Dorsolateral prefrontal cortex (tissue), 120 donors: ENCODE measurements at regions of chr19 and their contacts with region 1.

Region 1: DNA sequence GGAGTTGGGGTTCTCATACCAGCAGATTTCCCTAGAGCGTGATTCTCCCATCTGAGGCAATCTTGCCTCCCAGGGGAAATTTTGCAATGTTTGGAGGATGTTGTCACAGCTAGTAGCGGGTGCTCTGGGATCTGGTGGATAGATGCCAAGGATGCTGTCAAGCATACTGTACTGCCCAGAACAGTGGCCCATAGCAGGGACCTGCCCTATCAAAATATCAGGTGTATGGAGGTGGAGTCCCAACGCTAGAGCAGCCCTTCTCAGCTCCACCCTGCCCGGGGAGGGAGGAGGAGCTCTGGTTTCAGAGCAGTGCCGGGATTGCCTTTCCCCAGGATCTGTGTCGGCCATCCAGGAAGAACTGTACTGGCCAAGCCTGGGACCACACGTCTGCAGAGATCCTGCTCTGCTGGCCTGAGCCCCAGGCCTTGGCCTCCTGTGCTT is 10.9 kb upstream of the QTRT1 start:
- DNase-seq: peak in 1 of 10 donors; percentile 16
- H3K4me3 ChIP-seq: no peak overlapping the region
- H3K27ac ChIP-seq: peak overlapping the region in 4 of 59 donors; percentile 1 to 34 (median 28)
- H3K27me3 ChIP-seq: no peaks in the 10 kb centered on the region
- CTCF ChIP-seq: no peak

Region 2: GRCh38 chr19:10471909-10472308 is 218.5 kb before region 1 on chr19:
- intact Hi-C with region 1: no loop called
- DNase-seq: no peak
- H3K4me3 ChIP-seq: no peak overlapping the region
- H3K27ac ChIP-seq: no peak overlapping the region
- H3K27me3 ChIP-seq: no peaks in the 10 kb centered on the region
- CTCF ChIP-seq: peak in 44 of 56 donors; percentile 9 to 53 (median 32)

Region 3: DNA sequence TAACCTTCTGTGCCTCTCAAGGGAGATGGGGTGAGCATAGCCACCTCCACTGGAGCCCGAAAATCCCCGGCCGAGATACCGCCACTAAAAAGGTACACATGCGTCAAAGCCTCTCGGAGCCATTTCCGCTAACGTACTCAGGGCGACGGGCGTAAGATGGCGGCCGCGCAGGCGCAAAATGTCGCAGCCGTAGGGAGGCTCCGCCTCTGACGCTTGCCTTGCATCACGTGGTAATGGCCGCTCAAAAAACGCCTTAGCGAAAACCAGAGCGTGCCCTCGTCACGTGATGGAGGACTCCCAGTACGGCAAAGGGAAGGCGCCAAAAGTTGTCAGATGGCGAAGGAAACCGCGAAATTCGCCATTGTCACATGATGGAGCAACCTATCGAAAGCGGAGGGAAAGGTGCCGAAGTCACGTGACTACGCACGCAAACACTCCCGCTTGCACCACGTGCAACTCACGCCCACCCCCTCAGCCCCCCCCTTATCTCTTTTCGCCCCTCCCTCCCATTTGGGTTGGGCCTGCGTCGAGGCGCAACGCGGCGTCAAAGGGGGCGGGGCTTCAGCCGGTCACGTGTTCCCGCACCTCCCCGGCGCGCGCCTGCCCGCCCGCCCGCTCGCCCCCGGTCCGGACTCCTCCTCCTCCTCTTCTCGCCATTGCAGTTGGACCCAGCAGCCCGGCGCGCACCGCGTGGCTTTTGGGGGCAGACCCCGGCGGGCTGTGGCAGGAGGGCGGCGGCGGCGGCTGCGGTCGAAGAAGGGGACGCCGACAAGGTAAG is 36.5 kb before region 1 on chr19 and contains the start of gene ILF3:
- intact Hi-C with region 1: loop called in 1 of 2 experiments (anchors 5 kb)
- DNase-seq: peak; percentile 96 to 99 (median 98)
- H3K4me3 ChIP-seq: peak within 1 kb of the TSS; percentile 80 to 100 (median 97)
- H3K27ac ChIP-seq: peak within 1 kb of the TSS; percentile 92 to 100 (median 98)
- H3K27me3 ChIP-seq: no peaks in the 10 kb centered on the region
- CTCF ChIP-seq: peak in 11 of 56 donors; percentile 9 to 36 (median 15)
- total RNA-seq, gene ILF3: 131 to 221 (median 179) TPM